Breast epithelium (tissue), 4 donors: ENCODE measurements at regions of chr12 and their contacts with region 1.

Region 1: GRCh38 chr12:121823101-121823726 is 19.4 kb downstream of the SETD1B start:
- DNase-seq: no peak
- H3K4me3 ChIP-seq: no peak overlapping the region
- H3K27ac ChIP-seq: no peak overlapping the region
- H3K4me1 ChIP-seq: no peaks in the 10 kb centered on the region
- H3K27me3 ChIP-seq: no peaks in the 10 kb centered on the region
- CTCF ChIP-seq: no peak
- POLR2A ChIP-seq: no peak

Region 2: GRCh38 chr12:121872546-121873215 is 49.5 kb after region 1 on chr12:
- intact Hi-C with region 1: no loop called
- DNase-seq: no peak
- H3K4me3 ChIP-seq: no peak overlapping the region
- H3K27ac ChIP-seq: no peak overlapping the region
- H3K4me1 ChIP-seq: no peaks in the 10 kb centered on the region
- H3K27me3 ChIP-seq: no peaks in the 10 kb centered on the region
- CTCF ChIP-seq: no peak
- POLR2A ChIP-seq: no peak

Region 3: DNA sequence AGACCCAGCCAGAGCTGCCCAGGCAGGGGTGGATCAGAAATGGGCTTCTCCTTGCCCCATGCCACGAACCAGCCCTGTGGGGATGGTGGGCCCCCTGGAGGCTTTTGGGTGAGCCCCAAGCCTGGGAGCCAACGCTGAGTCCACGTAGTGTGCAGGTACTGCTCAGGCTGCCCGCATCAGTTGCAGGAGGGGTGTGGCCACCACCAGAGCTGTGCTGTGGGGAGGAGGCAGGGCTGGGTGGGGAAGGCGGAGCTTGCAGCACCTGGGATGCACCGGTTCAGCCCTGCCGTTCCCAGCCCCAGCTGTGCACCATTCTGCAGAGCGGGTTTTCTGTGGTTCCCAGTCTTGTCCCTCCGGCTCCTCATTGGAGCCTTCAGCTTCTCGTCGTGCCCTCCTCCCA is 314.5 kb after region 1 on chr12:
- intact Hi-C with region 1: loop called (anchors 10 kb)
- DNase-seq: peak in 1 of 2 donors; percentile 36
- H3K4me3 ChIP-seq: no peak overlapping the region
- H3K27ac ChIP-seq: no peak overlapping the region
- H3K4me1 ChIP-seq: no peaks in the 10 kb centered on the region
- H3K27me3 ChIP-seq: no peaks in the 10 kb centered on the region
- CTCF ChIP-seq: no peak
- POLR2A ChIP-seq: no peak